Heart left ventricle (tissue), 16 donors: ENCODE measurements at regions of chr4 and their contacts with region 1.

Region 1: DNA sequence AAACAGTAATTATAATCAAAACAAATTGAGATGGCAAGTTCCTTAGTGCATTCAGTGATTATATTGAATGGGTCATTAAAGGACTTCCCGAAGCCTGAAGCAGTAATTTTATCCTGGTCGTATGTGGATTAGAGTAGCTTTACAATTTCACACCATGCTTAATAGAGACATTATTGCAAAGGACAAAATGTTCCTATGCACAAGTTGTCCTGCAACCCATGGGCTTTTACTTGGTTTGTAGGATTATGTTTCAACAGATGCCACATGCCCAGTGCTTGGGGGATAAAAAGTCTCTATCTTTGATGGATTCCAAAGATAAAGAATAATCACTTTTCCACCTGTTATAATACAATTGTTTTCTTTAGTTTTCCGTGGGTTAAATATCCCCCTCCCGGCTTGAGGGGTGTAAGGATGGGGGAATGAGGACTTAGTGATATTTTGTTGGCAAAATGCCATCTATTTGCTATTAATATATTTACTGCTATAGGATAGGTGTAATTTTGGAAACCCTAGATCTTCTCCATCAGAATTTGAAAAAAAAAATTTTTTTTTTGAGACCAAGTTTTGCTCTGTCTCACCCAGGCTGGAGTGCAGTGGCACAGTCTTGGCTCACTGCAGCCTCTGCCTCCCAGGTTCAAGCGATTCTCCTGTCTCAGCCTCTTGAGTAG is 156.5 kb upstream of the ETNPPL start:
- DNase-seq: no peak
- ATAC-seq: no peak
- H3K4me3 ChIP-seq: no peak overlapping the region
- H3K27ac ChIP-seq: no peak overlapping the region
- H3K4me1 ChIP-seq: no peaks in the 10 kb centered on the region
- H3K27me3 ChIP-seq: no peaks in the 10 kb centered on the region
- CTCF ChIP-seq: no peak
- POLR2A ChIP-seq: no peak

Region 2: GRCh38 chr4:108877821-108878220 is 41.5 kb before region 1 on chr4:
- intact Hi-C with region 1: no loop called
- DNase-seq: no peak
- ATAC-seq: no peak
- H3K4me3 ChIP-seq: no peak overlapping the region
- H3K27ac ChIP-seq: no peak overlapping the region
- H3K4me1 ChIP-seq: peaks cover 0 to 6% (median 0%) of the 10 kb centered on the region in 12 donors
- H3K27me3 ChIP-seq: no peaks in the 10 kb centered on the region
- CTCF ChIP-seq: no peak
- POLR2A ChIP-seq: no peak

Region 3: DNA sequence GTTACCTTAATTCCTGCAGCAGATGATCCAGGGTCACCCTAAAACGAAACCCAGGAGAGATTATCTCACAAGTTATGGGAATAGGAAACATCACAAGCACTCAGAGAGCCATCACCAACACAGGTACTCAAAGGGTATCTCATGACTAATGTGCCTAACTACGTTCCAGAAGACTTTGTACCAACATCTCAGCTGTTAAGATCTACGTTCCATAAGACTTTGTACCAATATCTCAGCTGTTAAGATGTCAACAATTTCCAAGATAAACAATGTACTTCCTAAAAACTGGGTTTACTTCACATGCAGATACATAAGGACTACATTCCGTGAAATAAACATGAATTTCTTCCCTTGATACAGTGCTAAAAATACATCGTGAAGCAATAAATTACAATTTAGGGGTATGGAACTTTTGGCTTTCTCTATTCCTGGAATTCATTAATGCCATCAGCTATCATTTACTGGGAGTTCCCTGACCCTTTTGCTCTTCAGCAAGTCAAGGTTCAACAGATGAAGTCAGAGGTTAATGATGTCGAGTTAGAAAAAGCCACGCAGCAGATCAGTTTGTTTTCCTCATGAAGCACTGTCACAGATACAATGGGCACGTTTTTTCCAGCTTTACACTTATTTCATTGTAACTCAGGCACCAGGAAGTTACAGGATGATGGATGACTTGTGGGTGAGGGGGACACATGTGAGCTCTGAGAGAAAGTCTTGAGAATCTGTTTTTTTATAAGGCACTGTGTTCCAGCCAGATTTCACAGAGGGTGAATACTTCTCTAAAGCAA is 29.5 kb before region 1 on chr4:
- intact Hi-C with region 1: loop called in 1 of 10 experiments (anchors 2 kb)
- DNase-seq: no peak
- ATAC-seq: no peak
- H3K4me3 ChIP-seq: no peak overlapping the region
- H3K27ac ChIP-seq: no peak overlapping the region
- H3K4me1 ChIP-seq: no peaks in the 10 kb centered on the region
- H3K27me3 ChIP-seq: no peaks in the 10 kb centered on the region
- CTCF ChIP-seq: no peak
- POLR2A ChIP-seq: no peak